ENCODE measurements at regions of chr2 and their contacts with region 1.

Region 1: DNA sequence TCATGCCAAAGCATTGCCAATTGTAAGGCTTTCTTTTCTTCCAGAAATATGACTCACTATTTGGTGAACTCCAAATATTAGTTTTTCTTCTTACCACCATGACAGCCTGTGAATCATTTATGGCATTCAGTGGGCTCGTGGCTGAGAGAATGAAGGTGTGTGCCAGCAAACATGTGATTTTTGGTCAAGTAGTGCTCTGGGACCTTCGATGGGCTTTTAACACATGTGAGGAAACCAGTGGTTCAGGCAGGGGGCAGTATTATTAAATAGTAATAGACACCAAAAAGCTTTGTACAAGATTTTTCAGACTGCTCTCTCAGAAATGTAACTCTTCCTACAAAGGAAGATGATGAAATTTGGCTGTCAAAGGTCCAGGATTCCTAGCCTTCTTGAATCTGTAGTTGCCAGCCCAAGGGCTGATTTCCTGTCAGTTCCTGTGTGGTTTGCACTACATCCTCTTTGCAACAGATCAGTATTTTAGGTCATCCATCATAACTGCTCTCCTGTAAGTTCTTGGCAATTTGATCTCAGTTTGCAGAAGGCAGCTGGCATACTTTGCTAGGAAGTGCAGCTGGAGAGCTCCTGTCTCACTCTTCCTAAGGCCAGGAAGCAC is 64.3 kb downstream of the BABAM2 start:
- DNase-seq: peak; percentile 51 to 89
- H3K4me3 ChIP-seq: no peak overlapping the region
- H3K27ac ChIP-seq: peak overlapping the region; percentile 71 to 77
- H3K4me1 ChIP-seq: peaks cover 19 to 34% of the 10 kb centered on the region in 2 donors
- H3K27me3 ChIP-seq: no peaks in the 10 kb centered on the region
- CTCF ChIP-seq: peak in 2 of 3 experiments; percentile 16 to 46

Region 2: GRCh38 chr2:27890146-27890923 is 64.5 kb before region 1 on chr2 and contains the starts of genes BABAM2 and RBKS:
- intact Hi-C with region 1: loop called (anchors 2 kb)
- DNase-seq: peak; percentile 75 to 91
- H3K4me3 ChIP-seq: peak within 1 kb of the TSS; percentile 69 to 72
- H3K27ac ChIP-seq: peak within 1 kb of the TSS; percentile 90 to 95
- H3K4me1 ChIP-seq: peaks cover 0 to 21% of the 10 kb centered on the region in 2 donors
- H3K27me3 ChIP-seq: no peaks in the 10 kb centered on the region
- CTCF ChIP-seq: no peak
- total RNA-seq, gene BABAM2: 19.6 TPM
- total RNA-seq, gene RBKS: not detected

Region 3: GRCh38 chr2:27973592-27973991 is 18.7 kb after region 1 on chr2:
- intact Hi-C with region 1: no loop called
- DNase-seq: no peak
- H3K4me3 ChIP-seq: no peak overlapping the region
- H3K27ac ChIP-seq: no peak overlapping the region
- H3K4me1 ChIP-seq: no peaks in the 10 kb centered on the region
- H3K27me3 ChIP-seq: no peaks in the 10 kb centered on the region
- CTCF ChIP-seq: no peak

Region 4: GRCh38 chr2:28276076-28276618 is 321.3 kb after region 1 on chr2:
- intact Hi-C with region 1: loop called (anchors 5 kb)
- DNase-seq: peak in 1 of 2 donors; percentile 67
- H3K4me3 ChIP-seq: no peak overlapping the region
- H3K27ac ChIP-seq: peak overlapping the region; percentile 59 to 80
- H3K4me1 ChIP-seq: peaks cover 10 to 20% of the 10 kb centered on the region in 2 donors
- H3K27me3 ChIP-seq: no peaks in the 10 kb centered on the region
- CTCF ChIP-seq: no peak